SK-N-SH (cell line): ENCODE measurements at regions of chr3 and their contacts with region 1.

Region 1: DNA sequence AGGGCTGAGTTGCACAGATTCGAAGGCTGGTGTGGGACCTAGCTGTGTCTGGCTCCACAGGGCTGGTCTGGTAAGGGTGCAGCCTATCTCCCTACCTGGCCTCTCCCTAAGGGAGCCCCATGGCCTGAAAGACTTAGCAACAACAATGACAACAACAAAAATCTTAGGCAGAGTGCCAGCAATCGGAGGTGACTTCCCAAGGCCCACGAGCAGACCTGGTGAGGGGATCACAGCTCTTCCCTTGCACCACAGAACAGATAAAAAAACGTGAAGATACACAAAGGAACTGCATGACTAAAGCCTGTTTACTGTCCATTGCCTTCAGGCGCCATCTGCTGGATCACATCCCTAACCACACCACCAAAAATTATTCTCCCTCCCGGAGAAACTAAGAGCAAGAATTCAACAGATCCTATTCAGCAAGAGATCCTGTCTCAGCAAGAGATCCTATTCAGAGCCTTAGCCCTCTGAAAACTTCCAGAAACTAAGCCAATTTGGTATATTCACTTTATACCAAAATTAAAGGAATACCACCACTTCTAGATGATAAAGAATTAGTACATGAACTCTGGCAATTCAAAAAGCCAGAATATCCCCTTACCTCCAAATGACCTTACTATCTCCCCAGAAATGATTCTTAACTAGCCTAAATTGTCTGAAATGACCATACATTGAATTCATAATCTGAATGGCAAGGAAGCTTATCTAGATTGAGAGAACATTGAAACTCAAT is 24.1 kb upstream of the OR5K4 start:
- DNase-seq: peak; percentile 32
- H3K4me3 ChIP-seq: no peak overlapping the region; a peak in 1 of 4 replicates
- H3K27ac ChIP-seq: no peak overlapping the region
- H3K4me1 ChIP-seq: no peaks in the 10 kb centered on the region
- H3K27me3 ChIP-seq: peaks cover 4% of the 10 kb centered on the region; the same call in 1 of the 2 replicates
- CTCF ChIP-seq: peak; percentile 81
- EP300 ChIP-seq: no peak
- RAD21 ChIP-seq: peak; percentile 78

Region 2: DNA sequence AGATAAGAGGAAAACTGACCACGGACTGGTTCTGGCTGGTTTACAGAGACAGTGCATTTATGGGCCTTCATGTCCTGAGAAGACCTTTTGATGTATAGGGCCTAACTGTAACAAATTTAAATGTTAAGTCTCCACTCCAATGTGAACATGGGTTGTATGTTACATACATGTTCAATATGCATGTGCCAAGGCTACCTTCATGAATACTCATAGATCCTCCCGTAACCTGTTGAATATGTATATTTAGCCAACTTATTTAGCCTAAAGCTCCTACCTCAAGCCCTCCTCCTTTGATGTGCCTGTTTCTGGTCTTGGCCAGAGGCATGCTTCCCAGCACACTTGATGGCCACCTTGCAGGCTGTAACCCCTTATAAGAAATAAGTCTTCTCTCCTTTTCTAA is 47.4 kb before region 1 on chr3 and contains the start of gene OR5H2:
- CTCF ChIA-PET with region 1: no interaction called
- POLR2A ChIA-PET with region 1: no interaction called
- DNase-seq: no peak
- H3K4me3 ChIP-seq: no peak within 1 kb of the TSS
- H3K27ac ChIP-seq: no peak within 1 kb of the TSS
- H3K4me1 ChIP-seq: no peaks in the 10 kb centered on the region
- H3K27me3 ChIP-seq: no peaks in the 10 kb centered on the region
- CTCF ChIP-seq: no peak
- EP300 ChIP-seq: no peak
- RAD21 ChIP-seq: no peak
- polyA plus RNA-seq, gene OR5H2: not detected in 2 replicates

Region 3: DNA sequence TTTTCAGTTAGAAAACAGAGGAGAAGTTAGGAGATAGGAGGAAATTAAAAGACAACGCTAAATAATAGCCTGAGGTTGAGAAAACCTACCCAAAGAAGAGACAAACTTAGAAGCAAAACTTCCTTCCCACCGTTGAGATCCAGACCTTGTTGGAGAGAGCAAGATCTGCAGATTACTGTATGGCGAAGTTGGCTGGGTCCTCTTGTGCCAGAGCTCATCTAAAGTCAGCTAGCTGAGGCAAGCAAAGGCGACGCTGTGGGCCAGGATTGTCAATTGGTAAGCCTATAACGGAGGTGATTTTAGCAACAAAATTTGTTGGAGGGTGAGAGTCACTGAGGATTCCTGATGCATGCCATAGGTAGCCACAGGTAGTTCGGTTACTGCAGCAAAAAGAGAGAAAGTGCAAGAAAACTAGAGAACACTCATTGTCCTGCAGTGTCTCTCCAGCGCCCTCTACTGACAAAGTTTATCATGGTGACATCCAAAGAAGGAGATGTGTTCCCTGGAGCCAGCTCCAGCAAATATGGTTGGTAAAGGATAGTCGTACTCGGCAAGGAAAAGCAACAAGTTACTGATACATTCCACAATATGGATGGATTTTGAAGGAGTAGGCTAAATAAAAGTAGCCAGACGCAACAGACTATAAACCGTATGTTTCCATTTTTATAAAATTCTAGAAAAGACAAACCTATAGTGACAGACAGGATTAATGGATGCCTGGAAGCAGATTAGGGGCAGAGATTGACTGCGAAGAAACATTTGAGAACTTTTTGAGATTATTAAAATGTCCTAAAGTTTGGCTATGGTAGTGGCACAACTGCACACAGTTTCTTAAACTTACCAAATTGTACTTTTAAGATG is 14.3 kb after region 1 on chr3:
- CTCF ChIA-PET with region 1: interaction called, 19 read pairs
- POLR2A ChIA-PET with region 1: no interaction called
- DNase-seq: peak; percentile 22
- H3K4me3 ChIP-seq: peak overlapping the region in 1 of 2 experiments; percentile 55; a peak in 1 of 4 replicates
- H3K27ac ChIP-seq: no peak overlapping the region
- H3K4me1 ChIP-seq: no peaks in the 10 kb centered on the region
- H3K27me3 ChIP-seq: no peaks in the 10 kb centered on the region
- CTCF ChIP-seq: peak; percentile 74
- EP300 ChIP-seq: no peak
- RAD21 ChIP-seq: peak; percentile 54